Sciatic nerve (tissue), 2 donors: ENCODE measurements at regions of chr1 and their contacts with region 1.

Region 1: DNA sequence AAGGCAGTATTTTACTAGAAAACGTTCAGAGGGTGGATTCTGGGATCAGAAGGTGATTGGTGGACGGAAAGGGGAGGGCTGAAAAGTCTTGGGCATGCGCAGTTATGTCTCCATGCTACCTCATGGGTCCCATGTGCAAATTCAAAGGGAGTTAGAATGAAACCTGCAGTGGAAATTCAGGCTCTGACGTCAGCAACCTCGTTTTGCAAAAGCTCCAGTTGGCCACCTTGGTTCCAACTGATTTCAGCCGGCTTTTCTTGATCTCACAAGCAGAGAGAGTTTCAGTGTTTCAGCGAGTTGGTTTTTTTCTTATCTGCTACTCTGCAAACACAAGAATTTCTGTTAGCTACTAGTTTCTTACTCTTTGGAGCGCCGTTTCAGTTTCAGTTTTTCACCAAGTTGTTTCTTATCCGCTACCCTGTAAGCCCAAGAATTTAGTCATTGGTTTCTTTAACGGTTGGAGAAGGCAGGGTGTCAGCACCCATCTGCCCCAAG is 69.8 kb upstream of the PGBD5 start:
- DNase-seq: no peak
- ATAC-seq: no peak

Region 2: GRCh38 chr1:230464616-230465015 is 31.3 kb before region 1 on chr1:
- intact Hi-C with region 1: loop called (anchors 1 kb)
- DNase-seq: no peak
- ATAC-seq: no peak